ACHN (cell line): ENCODE measurements at regions of chr20 and their contacts with region 1.

Region 1: GRCh38 chr20:63191400-63191799 is 24.5 kb downstream of the YTHDF1 start:
- DNase-seq: no peak

Region 2: DNA sequence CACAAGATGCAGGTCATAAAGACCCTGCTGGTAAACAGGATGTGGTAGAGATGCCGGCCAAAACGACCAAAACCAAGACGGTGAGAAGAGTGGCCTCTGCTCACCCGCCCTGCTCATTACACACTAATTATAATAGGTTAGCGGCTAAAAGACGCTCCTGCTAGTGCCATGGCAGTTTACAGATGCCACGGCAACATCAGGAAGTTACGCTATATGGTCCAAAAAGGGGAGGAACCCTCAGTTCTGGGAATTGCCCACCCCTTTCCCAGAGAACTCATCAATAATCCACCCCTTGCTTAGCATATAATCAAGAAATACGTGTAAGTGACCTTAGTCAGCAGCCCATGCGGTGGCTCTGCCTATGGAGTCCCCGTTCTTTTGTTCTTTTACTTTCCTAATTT is 202.2 kb before region 1 on chr20:
- in situ Hi-C with region 1: no loop called
- DNase-seq: no peak

Region 3: DNA sequence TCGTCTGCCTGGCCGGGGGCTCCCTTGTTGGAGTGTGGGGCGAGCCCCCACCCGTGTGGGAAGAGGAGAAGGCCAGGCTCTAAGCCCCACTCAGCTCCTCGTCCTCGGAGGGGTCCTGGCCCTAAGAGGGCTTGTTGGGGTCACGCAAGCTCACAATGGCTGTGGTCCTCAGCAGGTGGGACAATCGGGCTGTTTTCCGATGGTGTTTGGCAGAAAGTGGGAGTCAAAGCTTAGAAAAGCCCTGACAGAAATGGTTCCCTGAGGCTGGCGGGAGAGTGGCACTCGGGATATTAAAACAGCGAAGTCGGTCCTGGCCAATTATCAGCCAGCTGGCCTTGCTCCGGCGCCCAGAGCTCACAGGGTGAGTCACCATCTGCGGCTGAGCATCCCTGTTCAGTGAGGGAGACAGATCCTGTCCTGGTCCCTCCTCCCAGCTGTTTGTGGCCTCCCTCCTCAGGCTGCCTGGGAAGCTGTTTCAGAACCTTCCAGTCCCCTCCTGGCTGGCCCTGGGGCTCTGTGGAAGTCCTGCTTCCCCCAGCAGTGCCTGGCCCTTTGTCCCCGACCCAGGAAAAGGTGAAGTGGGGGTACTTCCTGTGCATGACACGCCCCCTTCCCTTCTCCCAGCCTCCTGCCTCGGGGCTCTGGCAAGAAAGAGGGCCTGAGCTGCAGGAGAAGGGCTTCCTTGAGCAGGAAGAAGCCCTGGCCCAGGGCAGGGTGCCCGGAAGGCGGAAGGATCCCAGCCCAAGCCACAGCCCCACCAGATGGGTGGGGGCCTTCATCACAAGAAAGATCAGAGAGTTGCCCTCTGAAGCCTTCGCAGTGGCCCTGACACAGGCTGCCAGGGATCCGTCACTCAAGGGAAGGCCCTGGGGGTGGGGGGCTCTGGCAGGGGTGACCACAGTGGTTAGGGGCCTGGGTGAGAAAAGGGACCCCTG is 131.1 kb before region 1 on chr20:
- in situ Hi-C with region 1: loop called (anchors 10 kb)
- DNase-seq: peak; percentile 75